T-cell (primary cell): ENCODE measurements at regions of chr5 and their contacts with region 1.

Region 1: GRCh38 chr5:76521240-76521758 is 101.9 kb downstream of the F2RL2 start:
- DNase-seq: peak in 1 of 35 experiments; percentile 26
- ATAC-seq: peak in 1 of 4 experiments; percentile 29
- H3K4me3 ChIP-seq: no peak overlapping the region
- H3K4me3 Mint-ChIP-seq: peak overlapping the region in 1 of 3 donors; percentile 11
- H3K27ac ChIP-seq: no peak overlapping the region
- H3K27ac Mint-ChIP-seq: peak overlapping the region in 1 of 2 donors; percentile 19
- H3K4me1 ChIP-seq: peaks cover 2 to 11% of the 10 kb centered on the region in 2 experiments
- H3K4me1 Mint-ChIP-seq: peaks cover 51 to 77% (median 75%) of the 10 kb centered on the region in 3 donors
- H3K27me3 ChIP-seq: no peaks in the 10 kb centered on the region
- H3K27me3 Mint-ChIP-seq: no peaks in the 10 kb centered on the region

Region 2: GRCh38 chr5:76204719-76205118 is 316.6 kb before region 1 on chr5:
- CTCF ChIA-PET with region 1: no interaction called
- POLR2A ChIA-PET with region 1: no interaction called
- DNase-seq: no peak
- ATAC-seq: no peak
- H3K4me3 ChIP-seq: no peak overlapping the region
- H3K4me3 Mint-ChIP-seq: no peak overlapping the region
- H3K27ac ChIP-seq: no peak overlapping the region
- H3K27ac Mint-ChIP-seq: no peak overlapping the region
- H3K4me1 ChIP-seq: peaks cover 0 to 2% of the 10 kb centered on the region in 2 experiments
- H3K4me1 Mint-ChIP-seq: peaks cover 0 to 1% (median under 1%) of the 10 kb centered on the region in 3 donors
- H3K27me3 ChIP-seq: peaks cover 0 to 2% of the 10 kb centered on the region in 2 experiments
- H3K27me3 Mint-ChIP-seq: peaks cover 0 to 2% of the 10 kb centered on the region in 2 donors

Region 3: DNA sequence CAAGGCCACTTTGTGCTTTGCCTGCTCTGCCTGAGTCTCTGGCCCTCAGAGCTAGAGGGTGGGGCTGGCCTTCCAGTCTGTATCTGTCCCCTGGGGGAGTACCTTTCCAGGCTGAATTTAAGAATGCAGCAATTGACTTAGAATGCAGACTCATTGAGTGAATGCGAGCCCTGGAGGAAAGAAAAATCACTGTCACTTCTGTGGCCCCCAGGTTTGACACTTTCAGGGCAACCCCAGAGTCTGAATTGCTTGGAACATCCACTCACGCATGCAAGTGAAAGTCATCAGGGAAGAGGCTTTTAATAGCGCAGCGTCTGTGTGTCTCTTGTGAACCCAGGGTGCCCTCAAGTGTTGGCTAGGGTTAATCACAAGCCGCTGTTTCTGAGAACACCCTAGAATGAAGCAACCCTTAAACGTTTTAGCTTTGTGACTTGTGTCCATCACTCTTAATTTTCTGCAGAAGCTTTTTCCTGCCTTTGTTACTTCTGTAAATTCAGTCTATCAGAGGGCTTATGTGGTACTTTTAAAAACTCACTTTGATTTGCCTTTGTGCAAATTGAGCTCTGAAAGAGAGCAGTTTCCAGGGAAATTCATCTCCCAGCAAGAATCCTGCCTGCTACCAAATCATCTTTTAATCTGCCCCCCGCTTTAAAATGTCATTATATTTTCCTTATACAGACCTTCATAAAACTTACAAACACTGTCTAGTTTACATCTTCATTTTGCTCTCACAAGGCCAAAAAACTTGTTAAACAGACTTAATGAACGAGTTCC is 265.0 kb before region 1 on chr5:
- CTCF ChIA-PET with region 1: interaction called in 1 of 2 experiments, 10 read pairs
- POLR2A ChIA-PET with region 1: no interaction called
- DNase-seq: peak; percentile 18 to 82 (median 50)
- ATAC-seq: peak; percentile 97 to 99 (median 98)
- H3K4me3 ChIP-seq: peak overlapping the region in 1 of 2 donors; percentile 6
- H3K4me3 Mint-ChIP-seq: no peak overlapping the region
- H3K27ac ChIP-seq: no peak overlapping the region
- H3K27ac Mint-ChIP-seq: no peak overlapping the region
- H3K4me1 ChIP-seq: peaks cover 0 to 4% of the 10 kb centered on the region in 2 experiments
- H3K4me1 Mint-ChIP-seq: peaks cover 0 to 10% (median 7%) of the 10 kb centered on the region in 3 donors
- H3K27me3 ChIP-seq: peaks cover 0 to 11% of the 10 kb centered on the region in 2 experiments
- H3K27me3 Mint-ChIP-seq: peaks cover 0 to 3% of the 10 kb centered on the region in 2 donors

Region 4: DNA sequence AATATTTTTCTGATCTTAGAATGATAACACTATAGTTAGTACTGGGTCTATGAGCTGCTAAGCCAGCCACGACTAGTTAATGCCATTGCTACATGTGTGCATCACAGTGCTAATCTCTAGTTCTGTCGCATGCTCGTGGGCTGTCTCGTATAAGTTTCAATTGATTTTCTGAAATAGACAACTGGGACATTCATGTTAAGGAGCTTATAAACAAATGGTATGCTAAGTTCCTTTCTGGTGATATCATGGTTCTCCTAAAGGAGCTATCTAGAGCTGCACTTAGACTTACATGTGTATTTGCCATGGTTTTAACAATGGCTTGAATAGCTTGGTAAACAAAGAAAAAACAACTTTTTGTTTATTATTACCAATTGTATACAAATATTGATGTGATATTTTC is 55.7 kb after region 1 on chr5:
- CTCF ChIA-PET with region 1: no interaction called
- POLR2A ChIA-PET with region 1: interaction called in 1 of 2 experiments, 11 read pairs
- DNase-seq: no peak
- ATAC-seq: no peak
- H3K4me3 ChIP-seq: no peak overlapping the region
- H3K4me3 Mint-ChIP-seq: no peak overlapping the region
- H3K27ac ChIP-seq: no peak overlapping the region
- H3K27ac Mint-ChIP-seq: no peak overlapping the region
- H3K4me1 ChIP-seq: peaks cover 0 to 1% of the 10 kb centered on the region in 2 experiments
- H3K4me1 Mint-ChIP-seq: peaks cover 0 to 30% (median 19%) of the 10 kb centered on the region in 3 donors
- H3K27me3 ChIP-seq: no peaks in the 10 kb centered on the region
- H3K27me3 Mint-ChIP-seq: no peaks in the 10 kb centered on the region

Region 5: GRCh38 chr5:76595755-76596481 is 74.6 kb after region 1 on chr5:
- CTCF ChIA-PET with region 1: no interaction called
- POLR2A ChIA-PET with region 1: interaction called in 1 of 2 experiments, 19 read pairs
- DNase-seq: no peak
- ATAC-seq: no peak
- H3K4me3 ChIP-seq: no peak overlapping the region
- H3K4me3 Mint-ChIP-seq: no peak overlapping the region
- H3K27ac ChIP-seq: no peak overlapping the region
- H3K27ac Mint-ChIP-seq: peak overlapping the region; percentile 47 to 50
- H3K4me1 ChIP-seq: peaks cover 0 to 3% of the 10 kb centered on the region in 2 experiments
- H3K4me1 Mint-ChIP-seq: no peaks in the 10 kb centered on the region
- H3K27me3 ChIP-seq: no peaks in the 10 kb centered on the region
- H3K27me3 Mint-ChIP-seq: no peaks in the 10 kb centered on the region

Region 6: GRCh38 chr5:77390795-77391194 is 869.5 kb after region 1 on chr5:
- CTCF ChIA-PET with region 1: no interaction called
- POLR2A ChIA-PET with region 1: no interaction called
- DNase-seq: no peak
- ATAC-seq: no peak
- H3K4me3 ChIP-seq: no peak overlapping the region
- H3K4me3 Mint-ChIP-seq: no peak overlapping the region
- H3K27ac ChIP-seq: no peak overlapping the region
- H3K27ac Mint-ChIP-seq: no peak overlapping the region
- H3K4me1 ChIP-seq: no peaks in the 10 kb centered on the region
- H3K4me1 Mint-ChIP-seq: no peaks in the 10 kb centered on the region
- H3K27me3 ChIP-seq: peaks cover 0 to 17% of the 10 kb centered on the region in 2 experiments
- H3K27me3 Mint-ChIP-seq: no peaks in the 10 kb centered on the region